BJ (cell line): ENCODE measurements at regions of chr7 and their contacts with region 1.

Region 1: GRCh38 chr7:120792091-120792860 is 65.7 kb downstream of the TSPAN12 start:
- DNase-seq: no peak
- H3K4me3 ChIP-seq: no peak overlapping the region
- H3K27me3 ChIP-seq: no peaks in the 10 kb centered on the region
- CTCF ChIP-seq: peak; percentile 96

Region 2: DNA sequence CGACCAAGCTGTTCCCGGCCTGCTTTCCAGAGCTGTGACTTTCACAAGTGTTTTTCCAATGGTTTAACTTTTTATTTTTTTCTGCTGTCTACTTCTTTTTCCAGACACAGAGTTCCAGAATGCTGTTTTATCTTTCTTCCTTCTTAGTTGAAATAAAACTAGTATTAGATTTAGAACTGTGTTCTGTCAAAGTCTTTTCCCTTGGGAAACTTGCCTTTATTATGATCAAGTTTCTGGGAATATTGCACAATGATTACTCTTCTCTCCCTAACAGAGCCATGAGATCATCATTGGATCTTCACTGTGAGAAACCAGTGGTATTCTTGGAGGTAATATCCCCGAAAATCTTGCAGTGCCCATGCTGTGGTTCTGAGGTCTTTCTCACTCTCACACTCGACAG is 624.2 kb before region 1 on chr7:
- CTCF ChIA-PET with region 1: no interaction called
- POLR2A ChIA-PET with region 1: no interaction called
- DNase-seq: no peak
- H3K4me3 ChIP-seq: no peak overlapping the region
- H3K27me3 ChIP-seq: no peaks in the 10 kb centered on the region
- CTCF ChIP-seq: no peak

Region 3: DNA sequence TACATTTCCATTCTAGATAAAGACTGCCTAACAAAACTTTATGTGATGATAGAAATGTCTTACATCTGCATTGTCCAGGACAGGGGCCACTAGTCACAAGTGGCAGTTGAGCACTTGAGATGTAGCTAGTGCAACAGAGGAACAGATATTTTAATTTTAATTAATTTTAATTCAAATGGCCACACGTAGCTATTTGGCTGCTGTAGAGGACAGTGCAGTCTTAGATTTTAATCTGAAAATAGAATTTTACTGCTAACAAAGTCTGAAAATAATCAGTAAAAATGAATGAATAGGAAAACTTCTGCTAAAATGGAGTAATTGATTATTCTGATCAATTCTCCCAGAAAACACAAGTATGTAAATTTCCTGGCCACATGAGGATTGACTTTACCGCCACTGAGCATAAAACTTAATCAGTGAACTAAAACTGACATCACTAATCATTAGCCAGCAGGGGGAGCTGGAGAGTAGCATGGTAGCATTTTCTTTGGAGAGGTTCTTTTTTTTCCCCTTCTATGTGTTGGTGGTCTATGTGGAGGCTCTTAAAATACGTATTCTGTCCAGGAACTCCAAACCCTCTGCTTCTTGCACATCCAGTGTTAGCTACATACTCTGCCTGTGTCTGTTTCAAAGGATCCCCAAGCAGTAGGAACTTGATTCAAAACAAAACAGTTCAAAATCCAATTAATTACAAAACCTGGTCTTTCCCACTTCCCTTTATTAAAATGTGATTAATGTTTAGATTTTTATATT is 13.5 kb after region 1 on chr7:
- CTCF ChIA-PET with region 1: interaction called, 130 read pairs
- POLR2A ChIA-PET with region 1: no interaction called
- DNase-seq: no peak
- H3K4me3 ChIP-seq: no peak overlapping the region
- H3K27me3 ChIP-seq: no peaks in the 10 kb centered on the region; the same call in 1 of the 2 replicates
- CTCF ChIP-seq: peak; percentile 86

Region 4: GRCh38 chr7:121107923-121108498 is 315.7 kb after region 1 on chr7:
- CTCF ChIA-PET with region 1: interaction called, 23 read pairs
- POLR2A ChIA-PET with region 1: no interaction called
- DNase-seq: peak; percentile 17
- H3K4me3 ChIP-seq: no peak overlapping the region
- H3K27me3 ChIP-seq: no peaks in the 10 kb centered on the region
- CTCF ChIP-seq: peak; percentile 64

Region 5: GRCh38 chr7:121994625-121995410 is 1202.5 kb after region 1 on chr7:
- CTCF ChIA-PET with region 1: interaction called, 10 read pairs
- POLR2A ChIA-PET with region 1: no interaction called
- DNase-seq: peak; percentile 16
- H3K4me3 ChIP-seq: no peak overlapping the region
- H3K27me3 ChIP-seq: no peaks in the 10 kb centered on the region
- CTCF ChIP-seq: peak; percentile 80